ENCODE measurements at regions of chr18 and their contacts with region 1.

Region 1: GRCh38 chr18:57242289-57242688 is 95.4 kb downstream of the BOD1L2 start:
- DNase-seq: no peak
- H3K4me3 ChIP-seq: no peak overlapping the region
- H3K27ac ChIP-seq: no peak overlapping the region
- H3K4me1 ChIP-seq: no peaks in the 10 kb centered on the region
- H3K27me3 ChIP-seq: no peaks in the 10 kb centered on the region
- CTCF ChIP-seq: no peak
- POLR2A ChIP-seq: no peak

Region 2: GRCh38 chr18:56615738-56616520 is 626.4 kb before region 1 on chr18:
- intact Hi-C with region 1: loop called (anchors 5 kb)
- DNase-seq: no peak
- H3K4me3 ChIP-seq: no peak overlapping the region
- H3K27ac ChIP-seq: no peak overlapping the region
- H3K4me1 ChIP-seq: no peaks in the 10 kb centered on the region
- H3K27me3 ChIP-seq: no peaks in the 10 kb centered on the region
- CTCF ChIP-seq: no peak
- POLR2A ChIP-seq: no peak

Region 3: GRCh38 chr18:56756966-56757365 is 485.3 kb before region 1 on chr18:
- intact Hi-C with region 1: no loop called
- DNase-seq: no peak
- H3K4me3 ChIP-seq: no peak overlapping the region
- H3K27ac ChIP-seq: no peak overlapping the region
- H3K4me1 ChIP-seq: no peaks in the 10 kb centered on the region
- H3K27me3 ChIP-seq: no peaks in the 10 kb centered on the region
- CTCF ChIP-seq: no peak
- POLR2A ChIP-seq: no peak